HEK293T (cell line): ENCODE measurements at regions of chr16 and their contacts with region 1.

Region 1: DNA sequence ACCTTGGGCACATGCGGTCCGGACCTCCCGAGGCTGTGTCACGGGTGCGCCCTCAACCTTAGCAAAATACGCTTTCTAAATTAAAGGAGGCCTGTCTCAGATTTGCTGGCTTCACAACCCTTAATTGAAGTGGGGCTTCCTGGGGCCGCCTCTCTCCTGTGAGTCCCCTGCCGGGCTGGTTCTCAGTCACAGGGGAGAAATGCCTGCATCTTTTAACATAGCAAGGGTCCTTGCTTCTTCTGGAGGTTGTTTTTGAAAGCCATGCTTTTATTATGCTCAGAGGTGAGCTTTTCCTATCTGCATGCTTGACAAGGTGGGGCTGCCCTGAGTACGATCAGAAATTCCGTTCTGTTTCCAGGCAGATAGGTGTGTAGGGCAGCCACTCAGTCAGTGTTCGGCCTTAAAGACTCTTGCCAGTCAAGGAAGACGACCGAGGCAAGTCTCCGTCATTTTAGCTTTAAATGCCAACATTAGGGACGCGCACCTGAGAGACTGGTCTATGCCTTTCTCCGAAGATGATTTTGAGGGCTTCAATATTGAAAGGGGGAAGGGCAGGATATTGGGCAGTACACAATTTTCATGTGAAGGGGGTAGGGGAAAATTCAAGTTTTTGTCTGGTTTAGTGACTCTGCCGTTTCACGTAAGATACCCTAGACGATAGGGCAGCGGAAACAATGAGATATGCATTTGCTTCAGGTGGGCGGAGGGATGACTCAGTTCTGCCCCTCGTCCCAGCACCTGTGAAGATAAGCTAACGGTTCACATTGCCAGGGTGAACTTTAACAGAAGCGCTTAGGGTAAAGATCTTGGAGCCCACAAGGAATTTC is 5.5 kb upstream of the SLC7A5 start:
- DNase-seq: no peak

Region 2: DNA sequence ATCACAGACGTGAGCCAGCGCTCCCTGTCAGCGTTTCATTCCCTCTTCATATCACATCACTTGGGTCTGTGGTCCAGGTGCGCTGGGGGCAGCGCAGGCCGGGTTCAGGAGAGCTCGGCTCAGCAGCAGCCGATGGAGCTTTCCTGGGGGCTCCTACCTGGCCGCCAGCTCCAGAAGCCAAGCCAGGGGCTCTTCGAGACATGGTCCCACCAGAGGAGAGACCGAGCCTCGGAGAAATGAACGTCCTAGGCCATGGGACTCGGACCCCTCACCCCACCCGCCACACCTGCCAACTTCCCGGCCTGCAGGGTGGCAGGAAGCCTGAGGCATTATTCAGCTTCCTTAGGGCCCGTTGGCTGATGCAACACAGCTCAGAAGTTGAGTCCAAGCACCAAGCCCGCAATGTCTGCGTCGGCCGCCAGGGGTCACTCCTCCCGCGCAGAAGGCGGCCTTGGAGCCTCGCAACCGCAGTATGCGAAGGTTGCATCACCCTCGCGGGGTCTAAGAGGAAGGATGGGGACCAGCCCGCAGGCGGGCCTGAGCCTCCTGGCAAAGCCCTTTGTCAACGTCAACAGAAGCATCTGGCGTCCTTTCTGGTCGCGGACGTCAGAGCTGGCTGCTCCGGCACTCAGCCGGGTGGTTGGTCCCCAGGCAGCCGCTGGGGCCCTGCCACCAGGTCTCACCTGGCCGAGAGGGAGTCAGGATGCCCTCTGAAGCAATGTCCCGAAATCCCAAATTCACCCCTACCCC is 95.8 kb before region 1 on chr16:
- CTCF ChIA-PET with region 1: interaction called, 69 read pairs
- POLR2A ChIA-PET with region 1: interaction called, 31 read pairs
- DNase-seq: peak; percentile 84

Region 3: GRCh38 chr16:88144028-88144511 is 269.2 kb after region 1 on chr16:
- CTCF ChIA-PET with region 1: no interaction called
- POLR2A ChIA-PET with region 1: no interaction called
- DNase-seq: no peak